ENCODE measurements at regions of chr11 and their contacts with region 1.

Region 1: GRCh38 chr11:102359372-102359771 is 12.4 kb downstream of the BIRC2 start:
- H3K4me3 Mint-ChIP-seq: no peak overlapping the region
- H3K27ac Mint-ChIP-seq: no peak overlapping the region
- H3K4me1 Mint-ChIP-seq: peaks cover 29% of the 10 kb centered on the region
- H3K27me3 Mint-ChIP-seq: no peaks in the 10 kb centered on the region

Region 2: DNA sequence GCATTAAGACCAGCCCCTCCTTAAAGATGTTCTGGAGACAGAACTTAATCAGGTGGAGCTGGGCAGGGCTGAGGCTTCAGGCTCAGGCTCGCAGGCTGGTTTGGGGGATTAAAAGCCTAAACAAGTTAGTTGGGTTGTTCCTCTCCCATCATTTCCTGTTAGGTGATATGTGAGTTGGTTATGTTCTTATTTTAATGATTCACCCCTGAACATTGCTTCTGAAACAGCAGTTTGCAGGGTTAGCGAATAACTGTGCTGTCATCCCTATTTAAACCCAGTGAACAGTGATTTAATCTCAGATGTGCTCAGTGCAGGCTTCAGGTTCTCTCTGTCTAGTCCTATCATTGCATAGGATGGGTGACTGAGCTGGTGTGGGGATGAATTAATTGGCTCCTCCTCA is 89.4 kb before region 1 on chr11:
- intact Hi-C with region 1: no loop called
- H3K4me3 Mint-ChIP-seq: no peak overlapping the region
- H3K27ac Mint-ChIP-seq: no peak overlapping the region
- H3K4me1 Mint-ChIP-seq: peaks cover 16% of the 10 kb centered on the region
- H3K27me3 Mint-ChIP-seq: peaks cover 63% of the 10 kb centered on the region

Region 3: DNA sequence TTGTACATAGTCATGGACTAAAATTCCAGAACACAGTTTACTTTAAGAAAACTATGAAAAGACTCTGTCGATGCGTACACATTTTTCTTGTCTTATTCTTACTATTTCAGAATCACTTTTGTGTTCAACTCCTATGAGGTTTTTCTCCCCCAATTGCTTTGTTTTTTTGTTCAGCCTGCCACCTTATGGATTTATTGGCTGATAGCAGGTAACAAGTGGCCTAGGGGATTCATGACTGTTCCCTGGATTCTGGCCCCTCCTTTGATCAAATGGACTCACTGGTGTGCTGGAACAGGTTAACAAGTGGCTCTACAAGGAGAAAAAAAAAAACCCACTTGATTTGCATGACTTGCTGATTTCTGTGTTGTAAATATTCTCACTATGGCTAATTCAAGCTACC is 255.1 kb after region 1 on chr11:
- intact Hi-C with region 1: loop called (anchors 10 kb)
- H3K4me3 Mint-ChIP-seq: no peak overlapping the region
- H3K27ac Mint-ChIP-seq: no peak overlapping the region
- H3K4me1 Mint-ChIP-seq: no peaks in the 10 kb centered on the region
- H3K27me3 Mint-ChIP-seq: no peaks in the 10 kb centered on the region

Region 4: GRCh38 chr11:102685338-102685737 is 326.0 kb after region 1 on chr11:
- intact Hi-C with region 1: no loop called
- H3K4me3 Mint-ChIP-seq: no peak overlapping the region
- H3K27ac Mint-ChIP-seq: no peak overlapping the region
- H3K4me1 Mint-ChIP-seq: peaks cover 18% of the 10 kb centered on the region
- H3K27me3 Mint-ChIP-seq: no peaks in the 10 kb centered on the region

Measured in dendritic cell treated with granulocyte-macrophage colony-stimulating factor and Interleukin-4, amounts not matched to agents 40 ng/mL and 50 ng/mL, for 4 days (primary cell).